Activated T-helper 1 cell treated with anti-CD3 and anti-CD28 coated beads, Interleukin-12 subunit alpha, Interleukin-12 subunit beta, Interleukin-2, Interleukin-4 antibody, amounts not matched to agents 30 ng/mL and 10 ng/mL and 1 ng/mL, durations not matched to agents 14 hours and 24 hours and 36 hours (primary cell): ENCODE measurements at regions of chr16 and their contacts with region 1.

Region 1: GRCh38 chr16:57591086-57591869 is 37.2 kb upstream of the ADGRG1 start:
- DNase-seq: peak; percentile 56
- H3K4me3 Mint-ChIP-seq: peak overlapping the region; percentile 63
- H3K27ac Mint-ChIP-seq: peak overlapping the region; percentile 85
- H3K4me1 Mint-ChIP-seq: peaks cover 55% of the 10 kb centered on the region
- H3K27me3 Mint-ChIP-seq: peaks cover 2% of the 10 kb centered on the region

Region 2: GRCh38 chr16:57564571-57565270 is 26.6 kb before region 1 on chr16:
- intact Hi-C with region 1: no loop called
- DNase-seq: no peak
- H3K4me3 Mint-ChIP-seq: no peak overlapping the region
- H3K27ac Mint-ChIP-seq: no peak overlapping the region
- H3K4me1 Mint-ChIP-seq: no peaks in the 10 kb centered on the region
- H3K27me3 Mint-ChIP-seq: no peaks in the 10 kb centered on the region

Region 3: DNA sequence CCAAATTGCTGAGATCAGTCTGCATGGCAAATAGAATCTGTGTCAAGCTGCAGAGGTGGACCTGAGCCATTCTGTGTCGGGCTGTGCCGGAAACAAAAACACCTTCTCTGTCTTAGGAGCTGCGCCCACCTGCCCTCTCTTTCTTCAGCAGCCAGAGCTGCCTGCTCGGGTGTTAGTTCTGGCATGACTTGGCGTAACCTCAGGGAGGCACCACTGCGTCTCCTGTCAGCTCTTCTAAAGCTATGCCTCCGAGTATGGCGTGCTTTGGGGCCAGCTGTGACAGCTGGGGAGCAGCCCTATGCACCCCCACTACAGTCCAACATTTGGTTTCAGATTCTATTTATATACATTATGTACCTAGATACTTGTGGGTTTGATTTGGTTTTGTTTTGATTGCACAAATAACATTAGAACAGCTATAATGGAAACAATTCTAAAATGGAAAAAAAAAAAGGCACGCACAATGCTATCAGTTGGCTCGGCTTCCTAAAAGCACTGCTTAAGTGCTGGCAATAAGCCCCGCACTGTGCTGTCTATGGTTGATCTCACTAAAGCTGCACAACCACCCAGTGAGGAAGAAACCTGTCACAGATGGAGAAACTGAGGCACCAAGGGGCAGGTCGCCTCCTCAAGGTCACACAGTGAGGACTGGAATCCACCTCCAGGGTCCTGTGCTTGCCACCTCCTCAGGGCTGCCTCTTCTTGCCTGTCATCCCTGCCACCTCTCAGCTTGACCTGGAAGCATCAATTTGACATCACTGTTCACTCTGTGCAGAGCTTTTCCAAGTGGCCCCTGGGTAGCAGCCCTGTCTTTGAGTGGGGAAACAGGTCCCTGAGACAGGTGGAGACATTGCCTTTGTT is 18.5 kb after region 1 on chr16:
- intact Hi-C with region 1: loop called (anchors 1 kb)
- DNase-seq: peak; percentile 74
- H3K4me3 Mint-ChIP-seq: peak overlapping the region; percentile 69
- H3K27ac Mint-ChIP-seq: peak overlapping the region; percentile 99
- H3K4me1 Mint-ChIP-seq: peaks cover 68% of the 10 kb centered on the region
- H3K27me3 Mint-ChIP-seq: no peaks in the 10 kb centered on the region

Region 4: GRCh38 chr16:57628008-57628781 is 36.9 kb after region 1 on chr16 and contains the start of gene ADGRG1:
- intact Hi-C with region 1: loop called (anchors 1 kb)
- DNase-seq: peak; percentile 22
- H3K4me3 Mint-ChIP-seq: peak within 1 kb of the TSS; percentile 78
- H3K27ac Mint-ChIP-seq: peak within 1 kb of the TSS; percentile 29
- H3K4me1 Mint-ChIP-seq: peaks cover 20% of the 10 kb centered on the region
- H3K27me3 Mint-ChIP-seq: peaks cover 19% of the 10 kb centered on the region
- total RNA-seq, gene ADGRG1: 6.4 and 7.7 TPM in 2 replicates

Region 5: DNA sequence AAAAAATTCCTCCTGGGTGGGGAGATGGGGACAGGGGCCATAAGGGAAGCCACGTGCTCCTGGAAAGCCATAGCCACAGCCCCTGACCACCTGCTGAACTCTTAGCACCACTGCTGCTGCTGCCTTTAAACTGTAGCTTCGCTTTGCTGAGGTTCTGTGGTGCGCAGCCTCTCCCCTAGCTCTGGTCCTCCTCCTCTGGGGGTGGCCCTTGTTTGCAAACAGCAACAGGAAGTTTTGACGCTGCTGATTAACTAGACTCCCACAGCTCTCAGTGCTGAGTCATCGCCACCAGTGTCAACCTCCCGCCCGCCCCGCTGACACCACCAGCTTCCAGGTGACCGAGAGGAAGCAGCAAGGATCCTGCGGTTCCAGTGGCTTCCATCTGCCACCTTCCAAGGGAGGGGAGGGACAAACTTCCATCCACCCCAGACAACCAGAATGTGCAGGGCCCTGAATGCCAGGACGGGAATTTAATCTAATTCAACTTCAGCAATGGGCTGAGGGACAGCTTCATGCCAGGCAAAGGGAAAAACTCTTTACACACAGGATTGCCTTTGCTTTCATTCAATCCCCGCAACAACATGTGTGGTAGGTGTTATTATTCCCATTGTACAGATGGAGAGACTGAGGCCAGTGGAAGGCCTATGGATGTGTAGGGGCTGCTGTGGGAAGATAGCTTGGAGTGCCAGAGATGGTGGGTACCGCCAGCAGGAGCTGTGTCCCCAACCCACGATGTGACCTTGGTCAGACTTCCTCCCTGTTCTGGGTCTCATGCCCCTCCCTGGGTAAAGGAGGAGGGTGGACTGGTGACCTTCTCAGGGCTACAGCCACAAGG is 219.1 kb after region 1 on chr16:
- intact Hi-C with region 1: loop called (anchors 1 kb)
- DNase-seq: peak; percentile 80
- H3K4me3 Mint-ChIP-seq: peak overlapping the region; percentile 61
- H3K27ac Mint-ChIP-seq: peak overlapping the region; percentile 83
- H3K4me1 Mint-ChIP-seq: peaks cover 36% of the 10 kb centered on the region
- H3K27me3 Mint-ChIP-seq: peaks cover 18% of the 10 kb centered on the region

Region 6: GRCh38 chr16:58176608-58177352 is 585.5 kb after region 1 on chr16:
- intact Hi-C with region 1: no loop called
- DNase-seq: no peak
- H3K4me3 Mint-ChIP-seq: peak overlapping the region; percentile 9
- H3K27ac Mint-ChIP-seq: peak overlapping the region; percentile 84
- H3K4me1 Mint-ChIP-seq: peaks cover 36% of the 10 kb centered on the region
- H3K27me3 Mint-ChIP-seq: no peaks in the 10 kb centered on the region